MCF 10A (cell line): ENCODE measurements at regions of chr2 and their contacts with region 1.

Region 1: GRCh38 chr2:234257856-234258561 is 207.5 kb downstream of the SPP2 start:
- DNase-seq: peak; percentile 97
- H3K4me3 Mint-ChIP-seq: no peak overlapping the region
- H3K27ac Mint-ChIP-seq: peak overlapping the region; percentile 50
- H3K4me1 Mint-ChIP-seq: peaks cover 29% of the 10 kb centered on the region
- H3K27me3 Mint-ChIP-seq: no peaks in the 10 kb centered on the region
- CTCF ChIP-seq: peak; percentile 68

Region 2: DNA sequence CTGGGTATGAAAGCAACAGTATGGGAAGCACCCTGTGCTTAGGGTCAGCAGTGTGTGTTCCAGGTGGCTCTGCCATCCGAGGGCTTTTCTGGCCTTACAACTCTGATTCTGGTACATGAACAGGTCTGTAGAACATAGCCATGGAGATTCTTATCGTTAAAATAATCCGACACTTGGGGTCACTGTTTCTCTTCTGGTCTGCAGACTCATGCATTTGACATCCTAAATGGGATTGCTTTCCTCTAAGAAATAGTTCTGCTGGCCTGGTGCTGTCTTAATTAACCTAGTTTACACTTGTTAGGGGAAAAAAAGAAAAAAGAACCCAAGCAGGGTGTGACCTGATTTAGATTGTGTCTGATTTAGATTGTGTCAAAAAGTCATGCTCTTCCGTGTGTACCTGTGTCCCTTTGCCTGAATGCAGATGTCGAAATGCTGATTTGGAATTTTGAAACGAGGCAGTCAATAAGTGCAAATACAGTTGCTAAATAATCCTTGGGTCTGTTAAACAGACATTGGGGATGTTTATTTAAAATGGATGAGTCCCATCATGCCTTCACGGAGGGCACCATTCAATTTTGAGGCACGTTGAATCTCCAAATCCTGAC is 281.2 kb before region 1 on chr2:
- CTCF ChIA-PET with region 1: no interaction called
- POLR2A ChIA-PET with region 1: no interaction called
- intact Hi-C with region 1: loop called (anchors 1 kb)
- DNase-seq: peak; percentile 75
- H3K4me3 Mint-ChIP-seq: no peak overlapping the region
- H3K27ac Mint-ChIP-seq: no peak overlapping the region
- H3K4me1 Mint-ChIP-seq: peaks cover 29% of the 10 kb centered on the region
- H3K27me3 Mint-ChIP-seq: no peaks in the 10 kb centered on the region
- CTCF ChIP-seq: peak; percentile 68

Region 3: GRCh38 chr2:234091432-234091879 is 166.6 kb before region 1 on chr2:
- CTCF ChIA-PET with region 1: no interaction called
- POLR2A ChIA-PET with region 1: no interaction called
- intact Hi-C with region 1: no loop called
- DNase-seq: peak; percentile 82
- H3K4me3 Mint-ChIP-seq: peak overlapping the region; percentile 43
- H3K27ac Mint-ChIP-seq: peak overlapping the region; percentile 69
- H3K4me1 Mint-ChIP-seq: peaks cover 15% of the 10 kb centered on the region
- H3K27me3 Mint-ChIP-seq: no peaks in the 10 kb centered on the region
- CTCF ChIP-seq: no peak

Region 4: DNA sequence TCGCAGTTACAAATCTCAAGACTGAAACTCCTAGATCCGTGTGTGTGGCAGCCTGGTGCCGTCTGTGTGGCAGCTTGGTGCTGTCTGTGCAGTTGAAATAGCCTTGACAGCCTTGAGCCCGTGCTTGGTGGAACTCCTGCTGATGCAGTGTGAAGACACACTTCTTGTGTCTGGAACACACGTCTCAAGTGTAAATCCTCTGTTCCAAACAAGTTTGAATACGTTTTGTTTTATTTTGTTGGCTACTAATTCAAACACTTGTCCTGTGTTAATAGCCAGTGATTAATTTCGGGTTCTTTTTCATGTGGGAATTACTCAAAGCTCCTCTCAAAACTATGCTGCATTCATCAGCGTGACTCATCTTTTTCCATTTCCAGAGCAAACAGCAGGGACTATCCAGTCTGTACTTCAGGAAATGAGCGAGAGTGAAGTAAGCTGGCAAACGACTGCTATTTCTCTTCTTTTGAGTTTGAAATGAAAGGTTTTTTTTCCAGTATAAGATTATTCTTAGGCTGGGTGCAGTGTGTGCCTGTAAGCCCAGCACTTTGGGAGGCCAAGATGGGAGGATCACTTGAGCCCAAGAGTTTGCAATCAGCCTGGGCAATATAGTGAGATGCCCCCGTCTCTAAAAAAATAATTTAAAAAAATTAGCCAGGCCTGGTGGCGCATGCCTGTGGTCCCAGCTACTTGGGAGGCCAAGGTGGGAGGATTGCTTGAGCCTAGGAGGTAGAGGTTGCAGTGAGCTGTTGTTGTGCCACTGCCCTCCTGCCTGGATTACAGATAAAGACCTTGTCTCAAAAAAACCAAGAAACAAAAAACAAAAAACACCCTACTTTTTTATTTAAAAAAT is 54.6 kb before region 1 on chr2:
- CTCF ChIA-PET with region 1: interaction called, 4 read pairs
- POLR2A ChIA-PET with region 1: interaction called, 3 read pairs
- intact Hi-C with region 1: loop called (anchors 1 kb)
- DNase-seq: peak; percentile 96
- H3K4me3 Mint-ChIP-seq: peak overlapping the region; percentile 61
- H3K27ac Mint-ChIP-seq: peak overlapping the region; percentile 78
- H3K4me1 Mint-ChIP-seq: peaks cover 7% of the 10 kb centered on the region
- H3K27me3 Mint-ChIP-seq: peaks cover 6% of the 10 kb centered on the region
- CTCF ChIP-seq: no peak

Region 5: DNA sequence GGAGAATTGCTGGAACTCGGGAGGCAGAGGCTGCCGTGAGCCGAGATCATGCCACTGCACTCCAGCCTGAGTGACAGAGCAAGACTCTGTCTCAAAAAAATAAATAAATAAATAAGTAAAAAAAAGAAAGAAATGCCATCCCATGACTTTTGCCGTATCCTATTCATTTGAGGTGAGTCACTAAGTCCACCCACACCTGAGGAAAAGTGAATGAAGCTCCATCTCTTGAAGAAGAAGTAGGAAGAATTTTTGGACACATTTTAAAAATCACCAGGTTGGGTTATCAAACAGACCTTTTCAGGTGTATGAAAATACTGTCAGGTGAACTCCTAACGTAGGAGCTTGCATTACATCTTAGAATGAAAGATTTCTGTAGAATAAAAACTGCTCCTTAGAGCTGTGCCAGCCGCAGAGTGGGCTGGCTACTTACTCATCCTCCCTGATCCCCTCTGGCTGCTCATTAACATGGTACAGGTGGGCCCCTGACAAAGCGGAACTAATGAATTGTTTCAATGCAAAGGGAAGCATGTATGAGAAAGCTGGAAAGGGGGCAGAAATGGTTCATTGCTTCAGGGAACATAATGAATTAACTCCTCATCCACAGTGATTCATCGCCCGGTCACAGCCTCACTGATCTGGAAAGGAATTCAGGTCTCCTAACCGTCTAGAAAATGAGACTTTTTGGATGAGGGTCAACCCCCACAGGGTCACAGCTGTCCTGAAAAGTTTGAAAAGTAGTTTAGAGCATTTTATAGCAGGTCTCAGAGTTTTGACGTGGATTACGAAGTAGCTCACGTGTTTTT is 16.2 kb before region 1 on chr2:
- CTCF ChIA-PET with region 1: interaction called, 7 read pairs
- POLR2A ChIA-PET with region 1: interaction called, 37 read pairs
- intact Hi-C with region 1: no loop called
- DNase-seq: peak; percentile 84
- H3K4me3 Mint-ChIP-seq: peak overlapping the region; percentile 51
- H3K27ac Mint-ChIP-seq: peak overlapping the region; percentile 80
- H3K4me1 Mint-ChIP-seq: peaks cover 50% of the 10 kb centered on the region
- H3K27me3 Mint-ChIP-seq: no peaks in the 10 kb centered on the region
- CTCF ChIP-seq: no peak

Region 6: DNA sequence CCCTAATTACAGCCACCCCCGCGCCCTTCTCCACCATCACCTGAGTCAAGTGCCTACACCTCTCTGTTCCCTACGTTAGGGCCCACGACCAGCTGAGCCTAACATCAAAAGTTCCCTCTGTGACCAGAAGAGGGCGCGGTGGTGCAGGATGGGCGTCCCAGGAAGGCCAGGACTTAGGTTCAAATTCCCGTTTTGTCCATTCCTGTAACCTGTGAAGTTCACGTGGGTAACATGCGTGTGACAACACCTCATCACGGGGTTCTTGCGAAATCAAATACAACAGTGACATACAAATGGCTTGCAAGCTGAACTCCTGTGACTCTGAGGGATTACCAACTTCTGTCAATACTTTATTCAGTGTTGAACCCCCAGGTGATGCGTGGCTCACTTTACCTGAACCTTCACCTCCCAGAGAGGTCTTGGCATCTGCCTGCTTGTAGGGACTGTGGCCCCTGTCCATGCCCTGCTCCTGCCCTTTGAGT is 31.0 kb after region 1 on chr2:
- CTCF ChIA-PET with region 1: interaction called, 5 read pairs
- POLR2A ChIA-PET with region 1: interaction called, 3 read pairs
- intact Hi-C with region 1: loop called (anchors 1 kb)
- DNase-seq: peak; percentile 77
- H3K4me3 Mint-ChIP-seq: no peak overlapping the region
- H3K27ac Mint-ChIP-seq: no peak overlapping the region
- H3K4me1 Mint-ChIP-seq: peaks cover 18% of the 10 kb centered on the region
- H3K27me3 Mint-ChIP-seq: no peaks in the 10 kb centered on the region
- CTCF ChIP-seq: peak; percentile 77

Region 7: DNA sequence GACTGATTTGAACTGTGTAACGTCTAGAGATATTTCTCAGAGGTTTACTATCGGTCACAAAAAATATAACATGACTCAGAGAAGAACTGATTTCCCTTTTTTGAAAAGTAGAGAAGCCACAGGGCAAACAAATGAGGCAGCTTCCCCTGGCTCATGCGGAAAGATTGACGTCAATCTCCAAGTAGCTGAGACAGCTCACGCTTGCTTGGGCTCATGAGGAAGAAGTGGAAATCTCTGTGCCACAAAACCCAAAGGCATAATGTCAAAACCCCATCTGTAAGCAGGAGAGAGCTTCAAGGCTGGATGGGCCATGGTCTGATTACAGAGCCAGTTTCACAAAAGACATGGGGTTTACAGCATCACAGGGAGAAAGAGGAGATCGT is 50.8 kb after region 1 on chr2:
- CTCF ChIA-PET with region 1: interaction called, 3 read pairs
- POLR2A ChIA-PET with region 1: interaction called, 13 read pairs
- intact Hi-C with region 1: no loop called
- DNase-seq: no peak
- H3K4me3 Mint-ChIP-seq: no peak overlapping the region
- H3K27ac Mint-ChIP-seq: no peak overlapping the region
- H3K4me1 Mint-ChIP-seq: peaks cover 24% of the 10 kb centered on the region
- H3K27me3 Mint-ChIP-seq: no peaks in the 10 kb centered on the region
- CTCF ChIP-seq: no peak